K562 (cell line): ENCODE measurements at regions of chr1 and their contacts with region 1.

Region 1: DNA sequence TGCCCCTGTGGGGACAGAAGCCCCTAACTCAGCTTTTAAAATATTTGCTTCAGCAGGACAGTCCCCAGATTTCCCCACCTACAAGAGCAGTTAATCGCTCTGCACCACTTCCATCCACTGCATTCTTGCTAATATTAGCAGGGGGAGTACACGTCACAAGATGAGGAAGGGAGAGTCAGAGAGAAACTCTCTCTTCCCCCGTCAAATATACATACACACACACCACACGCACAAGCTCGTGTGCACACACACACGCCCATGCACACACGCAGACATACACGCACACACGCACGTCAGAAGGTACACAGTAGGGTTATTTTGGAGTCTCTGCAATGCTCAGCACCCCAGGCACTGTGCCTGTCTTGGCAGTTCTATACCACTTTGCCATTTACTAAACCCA is 2.1 kb downstream of the CLCA1 start:
- DNase-seq: no peak
- ATAC-seq: no peak
- H3K4me3 ChIP-seq: no peak overlapping the region
- H3K27ac ChIP-seq: no peak overlapping the region
- H3K4me1 ChIP-seq: no peaks in the 10 kb centered on the region; a peak in 1 of 5 replicates
- H3K27me3 ChIP-seq: no peaks in the 10 kb centered on the region; a peak in 1 of 5 replicates
- CTCF ChIP-seq: no peak
- EP300 ChIP-seq: no peak
- POLR2A ChIP-seq: no peak
- RAD21 ChIP-seq: no peak

Region 2: GRCh38 chr1:86419277-86419903 is 51.5 kb before region 1 on chr1:
- CTCF ChIA-PET with region 1: no interaction called
- POLR2A ChIA-PET with region 1: no interaction called
- in situ Hi-C with region 1: no loop called
- intact Hi-C with region 1: loop called (anchors 5 kb)
- DNase-seq: peak; percentile 25 to 66 (median 42)
- ATAC-seq: peak; percentile 89
- H3K4me3 ChIP-seq: no peak overlapping the region
- H3K27ac ChIP-seq: no peak overlapping the region
- H3K4me1 ChIP-seq: no peaks in the 10 kb centered on the region
- H3K27me3 ChIP-seq: peaks cover 0 to 10% of the 10 kb centered on the region in 2 experiments; a peak in 2 of 5 replicates
- CTCF ChIP-seq: peak; percentile 69 to 87 (median 86)
- EP300 ChIP-seq: no peak
- POLR2A ChIP-seq: no peak
- RAD21 ChIP-seq: peak; percentile 81 to 94